CD8-positive, alpha-beta T cell (primary cell): ENCODE measurements at regions of chr3 and their contacts with region 1.

Region 1: GRCh38 chr3:135650309-135650708 is 315.2 kb upstream of the PPP2R3A start:
- DNase-seq: no peak
- ATAC-seq: no peak
- H3K4me3 ChIP-seq: no peak overlapping the region
- H3K4me3 Mint-ChIP-seq: no peak overlapping the region
- H3K27ac ChIP-seq: no peak overlapping the region
- H3K27ac Mint-ChIP-seq: no peak overlapping the region
- H3K4me1 ChIP-seq: no peaks in the 10 kb centered on the region
- H3K4me1 Mint-ChIP-seq: no peaks in the 10 kb centered on the region
- H3K27me3 ChIP-seq: peaks cover 0 to 2% of the 10 kb centered on the region in 2 experiments
- H3K27me3 Mint-ChIP-seq: no peaks in the 10 kb centered on the region
- CTCF ChIP-seq: no peak

Region 2: DNA sequence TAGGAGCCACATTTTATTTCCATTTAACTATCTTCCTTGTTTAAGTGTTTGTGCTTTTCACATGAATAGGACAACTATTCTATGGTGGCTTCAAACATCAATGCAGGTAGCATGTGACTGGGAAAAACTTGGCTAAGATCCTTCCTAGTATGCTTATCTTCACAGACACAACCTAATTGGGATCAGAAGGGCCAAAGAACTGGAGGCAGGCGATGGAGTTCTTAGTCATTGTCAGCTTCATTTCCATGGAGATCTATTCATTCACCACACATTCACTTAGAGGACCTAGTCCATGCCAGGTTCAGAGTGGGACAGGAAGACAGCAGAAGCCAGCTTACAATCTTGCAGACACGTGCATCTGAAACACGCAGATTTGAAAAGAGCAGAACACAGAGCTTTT is 37.7 kb after region 1 on chr3:
- CTCF ChIA-PET with region 1: no interaction called
- POLR2A ChIA-PET with region 1: no interaction called
- intact Hi-C with region 1: no loop called
- DNase-seq: no peak
- ATAC-seq: no peak
- H3K4me3 ChIP-seq: no peak overlapping the region
- H3K4me3 Mint-ChIP-seq: no peak overlapping the region
- H3K27ac ChIP-seq: no peak overlapping the region
- H3K27ac Mint-ChIP-seq: no peak overlapping the region
- H3K4me1 ChIP-seq: no peaks in the 10 kb centered on the region
- H3K4me1 Mint-ChIP-seq: no peaks in the 10 kb centered on the region
- H3K27me3 ChIP-seq: no peaks in the 10 kb centered on the region
- H3K27me3 Mint-ChIP-seq: no peaks in the 10 kb centered on the region
- CTCF ChIP-seq: no peak

Region 3: GRCh38 chr3:136196401-136197158 is 546.3 kb after region 1 on chr3:
- CTCF ChIA-PET with region 1: no interaction called
- POLR2A ChIA-PET with region 1: no interaction called
- intact Hi-C with region 1: no loop called
- DNase-seq: peak; percentile 95 to 99 (median 99)
- ATAC-seq: peak; percentile 60
- H3K4me3 ChIP-seq: peak overlapping the region; percentile 84 to 91
- H3K4me3 Mint-ChIP-seq: peak overlapping the region; percentile 99
- H3K27ac ChIP-seq: peak overlapping the region; percentile 71 to 96
- H3K27ac Mint-ChIP-seq: peak overlapping the region; percentile 100
- H3K4me1 ChIP-seq: peaks cover 16% of the 10 kb centered on the region
- H3K4me1 Mint-ChIP-seq: peaks cover 37% of the 10 kb centered on the region
- H3K27me3 ChIP-seq: no peaks in the 10 kb centered on the region
- H3K27me3 Mint-ChIP-seq: no peaks in the 10 kb centered on the region
- CTCF ChIP-seq: no peak

Region 4: DNA sequence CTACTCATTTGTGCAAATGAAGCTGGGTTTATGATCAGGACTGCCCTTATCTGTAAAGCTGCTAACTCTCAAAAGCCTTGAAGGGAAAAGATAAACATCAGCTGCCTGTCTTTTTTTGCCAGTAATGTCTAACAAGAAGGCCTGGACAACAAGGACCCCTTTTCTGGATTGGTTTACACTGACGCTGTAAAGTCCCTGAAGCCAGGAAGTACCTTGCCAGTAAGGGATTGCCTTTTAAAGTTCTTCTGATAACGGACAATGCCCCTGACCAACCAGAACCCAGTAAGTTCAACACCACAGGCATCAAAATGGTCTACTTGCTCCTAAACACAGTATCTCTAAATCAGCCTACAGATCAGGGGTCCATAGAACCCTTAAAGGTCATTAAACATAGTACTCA is 777.9 kb after region 1 on chr3:
- CTCF ChIA-PET with region 1: no interaction called
- POLR2A ChIA-PET with region 1: no interaction called
- intact Hi-C with region 1: loop called in 1 of 2 experiments (anchors 10 kb)
- DNase-seq: no peak
- ATAC-seq: no peak
- H3K4me3 ChIP-seq: no peak overlapping the region
- H3K4me3 Mint-ChIP-seq: no peak overlapping the region
- H3K27ac ChIP-seq: no peak overlapping the region
- H3K27ac Mint-ChIP-seq: peak overlapping the region; percentile 20
- H3K4me1 ChIP-seq: no peaks in the 10 kb centered on the region
- H3K4me1 Mint-ChIP-seq: no peaks in the 10 kb centered on the region
- H3K27me3 ChIP-seq: no peaks in the 10 kb centered on the region
- H3K27me3 Mint-ChIP-seq: no peaks in the 10 kb centered on the region
- CTCF ChIP-seq: no peak